Vagina (tissue), 2 donors: ENCODE measurements at regions of chr3 and their contacts with region 1.

Region 1: GRCh38 chr3:186361762-186362536 is at the start of gene DGKG:
- DNase-seq: peak in 1 of 2 donors; percentile 83
- H3K4me3 ChIP-seq: peak within 1 kb of the TSS; percentile 40 to 43
- H3K27ac ChIP-seq: peak within 1 kb of the TSS; percentile 58
- H3K4me1 ChIP-seq: peaks cover 9% of the 10 kb centered on the region
- H3K27me3 ChIP-seq: peaks cover 8% of the 10 kb centered on the region
- CTCF ChIP-seq: no peak
- POLR2A ChIP-seq: no peak
- total RNA-seq, gene DGKG: 2.5 TPM

Region 2: GRCh38 chr3:186413615-186414415 is 51.9 kb after region 1 on chr3:
- intact Hi-C with region 1: loop called (anchors 10 kb)
- DNase-seq: no peak
- H3K4me3 ChIP-seq: peak overlapping the region; percentile 34 to 45
- H3K27ac ChIP-seq: peak overlapping the region; percentile 56
- H3K4me1 ChIP-seq: peaks cover 11% of the 10 kb centered on the region
- H3K27me3 ChIP-seq: no peaks in the 10 kb centered on the region
- CTCF ChIP-seq: no peak
- POLR2A ChIP-seq: no peak